ENCODE measurements at regions of chr11 and their contacts with region 1.

Region 1: DNA sequence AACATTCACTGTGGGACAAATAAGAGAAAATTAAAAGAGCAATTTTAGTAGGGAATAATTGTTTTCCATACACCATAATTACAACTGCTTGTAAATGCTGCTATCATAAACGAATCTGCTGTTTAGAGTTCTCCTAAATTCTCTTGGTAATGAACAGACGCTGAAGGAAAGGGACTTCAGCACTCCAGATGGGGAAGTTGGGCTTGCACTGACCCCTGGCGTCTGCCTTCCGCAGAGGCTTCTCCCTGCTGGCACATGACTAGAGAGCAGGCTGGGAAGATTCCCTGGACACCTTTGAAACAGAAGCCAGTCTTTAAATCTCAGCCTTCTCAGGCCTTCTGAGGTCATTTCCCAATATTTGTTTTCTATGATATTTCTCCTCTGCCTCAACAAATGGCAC is 84.1 kb downstream of the NXPE2 start:
- DNase-seq: peak; percentile 31 to 59 (median 44)
- ATAC-seq: peak; percentile 95
- H3K4me3 ChIP-seq: no peak overlapping the region
- H3K27ac ChIP-seq: no peak overlapping the region
- H3K4me1 ChIP-seq: no peaks in the 10 kb centered on the region
- H3K27me3 ChIP-seq: no peaks in the 10 kb centered on the region
- CTCF ChIP-seq: peak; percentile 72 to 82 (median 77)
- EP300 ChIP-seq: no peak
- POLR2A ChIP-seq: no peak
- RAD21 ChIP-seq: peak; percentile 80 to 83

Region 2: DNA sequence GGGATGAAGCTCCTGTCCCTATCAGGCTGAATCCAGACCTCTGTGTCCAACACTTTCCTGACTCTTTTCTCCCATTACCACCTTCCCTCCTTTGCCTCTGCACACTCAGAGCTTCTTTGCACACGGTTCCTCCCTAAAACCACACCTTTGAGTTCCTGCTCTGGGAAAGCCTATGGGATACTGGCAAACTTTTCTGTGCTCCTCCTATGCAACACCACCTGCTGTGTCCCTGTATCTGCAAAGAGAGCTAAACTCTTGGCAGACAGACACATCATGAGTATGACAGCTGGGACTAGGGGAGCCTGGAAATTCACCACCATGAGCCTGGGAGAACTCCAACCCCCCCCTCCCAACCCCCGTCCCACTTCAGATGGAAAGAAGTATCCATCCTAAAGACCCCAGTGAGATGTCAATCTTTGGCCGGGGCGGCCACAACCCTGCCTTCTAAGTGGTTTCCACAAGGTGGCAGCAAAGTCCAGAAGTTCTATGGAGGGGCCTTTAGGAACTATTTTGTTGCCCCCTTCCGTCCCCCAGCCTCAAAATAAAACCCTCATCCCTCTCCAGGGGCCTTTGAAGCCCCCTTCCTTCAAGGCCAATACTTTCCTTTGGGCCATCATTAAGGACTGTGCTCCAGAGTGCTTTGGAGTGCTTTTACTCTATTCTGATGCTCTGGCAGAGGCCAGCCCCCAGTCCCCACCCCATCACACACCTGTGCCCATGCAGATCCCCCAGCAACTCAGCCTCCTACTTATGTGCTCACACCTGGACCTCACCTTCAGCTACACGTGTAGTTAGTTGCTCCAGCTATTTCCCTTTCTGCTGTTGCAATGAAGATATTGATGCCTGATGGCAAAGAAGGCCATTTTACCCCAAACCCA is 768.1 kb before region 1 on chr11:
- CTCF ChIA-PET with region 1: no interaction called
- POLR2A ChIA-PET with region 1: no interaction called
- in situ Hi-C with region 1: no loop called
- intact Hi-C with region 1: loop called (anchors 5 kb)
- DNase-seq: peak; percentile 40 to 65 (median 50)
- ATAC-seq: peak; percentile 80
- H3K4me3 ChIP-seq: no peak overlapping the region
- H3K27ac ChIP-seq: no peak overlapping the region
- H3K4me1 ChIP-seq: no peaks in the 10 kb centered on the region
- H3K27me3 ChIP-seq: peaks cover 0 to 16% of the 10 kb centered on the region in 2 experiments; a peak in 2 of 5 replicates
- CTCF ChIP-seq: peak; percentile 70 to 77 (median 74)
- EP300 ChIP-seq: no peak
- POLR2A ChIP-seq: no peak
- RAD21 ChIP-seq: peak; percentile 82 to 89

Region 3: GRCh38 chr11:114317787-114318137 is 444.6 kb before region 1 on chr11:
- CTCF ChIA-PET with region 1: interaction called, 3 read pairs
- POLR2A ChIA-PET with region 1: no interaction called
- in situ Hi-C with region 1: no loop called
- intact Hi-C with region 1: loop called (anchors 1 kb)
- DNase-seq: peak in 2 of 4 experiments; percentile 53 to 69
- ATAC-seq: peak; percentile 78
- H3K4me3 ChIP-seq: no peak overlapping the region
- H3K27ac ChIP-seq: no peak overlapping the region
- H3K4me1 ChIP-seq: peaks cover 0 to 10% of the 10 kb centered on the region in 2 experiments; a peak in 3 of 5 replicates
- H3K27me3 ChIP-seq: no peaks in the 10 kb centered on the region
- CTCF ChIP-seq: peak; percentile 66 to 73 (median 70)
- EP300 ChIP-seq: no peak
- POLR2A ChIP-seq: no peak
- RAD21 ChIP-seq: peak; percentile 57 to 77

Region 4: GRCh38 chr11:114501901-114502300 is 260.5 kb before region 1 on chr11:
- CTCF ChIA-PET with region 1: no interaction called
- POLR2A ChIA-PET with region 1: no interaction called
- in situ Hi-C with region 1: no loop called
- intact Hi-C with region 1: loop called (anchors 10 kb)
- DNase-seq: no peak
- ATAC-seq: no peak
- H3K4me3 ChIP-seq: no peak overlapping the region
- H3K27ac ChIP-seq: no peak overlapping the region
- H3K4me1 ChIP-seq: no peaks in the 10 kb centered on the region
- H3K27me3 ChIP-seq: no peaks in the 10 kb centered on the region
- CTCF ChIP-seq: no peak
- EP300 ChIP-seq: no peak
- POLR2A ChIP-seq: no peak
- RAD21 ChIP-seq: no peak